PC-9 (cell line): ENCODE measurements at regions of chr15 and their contacts with region 1.

Region 1: DNA sequence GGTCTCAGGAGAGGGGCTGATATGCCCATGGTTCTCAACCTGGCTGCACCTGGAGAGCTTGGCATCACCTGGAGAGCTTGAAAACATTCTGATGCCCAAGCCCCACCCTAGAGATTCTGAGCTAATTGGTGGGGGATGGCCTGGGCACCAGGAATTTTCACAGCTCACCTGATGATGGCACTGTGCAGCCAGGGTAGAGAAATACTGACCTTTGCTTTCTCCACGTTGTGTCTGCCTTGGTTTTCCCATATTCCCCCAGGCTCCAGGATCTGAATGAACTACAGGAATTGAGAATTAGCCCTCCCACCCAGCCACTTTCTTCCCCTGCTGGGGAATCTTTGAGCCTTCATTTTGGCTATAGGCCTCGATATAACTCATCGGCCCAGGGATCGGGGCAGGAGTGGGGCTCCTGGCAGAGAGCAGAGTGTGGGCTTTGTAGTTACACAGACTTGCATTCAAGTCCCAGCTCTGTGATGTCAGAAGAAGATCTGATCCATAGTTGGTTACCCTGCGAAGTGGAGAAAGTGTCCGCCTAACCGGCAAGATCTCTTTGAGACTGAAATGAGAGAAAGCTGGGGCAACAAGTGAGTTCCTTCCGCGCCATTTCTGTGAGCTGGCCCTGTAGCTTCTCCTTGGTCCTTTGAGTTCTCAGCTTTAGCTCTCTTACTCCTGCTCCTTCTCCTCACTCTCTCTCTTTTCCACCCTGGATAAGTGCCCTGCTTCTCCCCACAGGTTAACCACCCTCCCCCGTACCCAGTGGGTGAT is 33.1 kb upstream of the UBE2Q2 start:
- DNase-seq: peak in 1 of 2 experiments; percentile 52
- H3K4me3 ChIP-seq: no peak overlapping the region
- H3K27ac ChIP-seq: no peak overlapping the region
- H3K4me1 ChIP-seq: no peaks in the 10 kb centered on the region
- H3K27me3 ChIP-seq: no peaks in the 10 kb centered on the region
- CTCF ChIP-seq: peak; percentile 57; the same call in 1 of the 2 replicates

Region 2: DNA sequence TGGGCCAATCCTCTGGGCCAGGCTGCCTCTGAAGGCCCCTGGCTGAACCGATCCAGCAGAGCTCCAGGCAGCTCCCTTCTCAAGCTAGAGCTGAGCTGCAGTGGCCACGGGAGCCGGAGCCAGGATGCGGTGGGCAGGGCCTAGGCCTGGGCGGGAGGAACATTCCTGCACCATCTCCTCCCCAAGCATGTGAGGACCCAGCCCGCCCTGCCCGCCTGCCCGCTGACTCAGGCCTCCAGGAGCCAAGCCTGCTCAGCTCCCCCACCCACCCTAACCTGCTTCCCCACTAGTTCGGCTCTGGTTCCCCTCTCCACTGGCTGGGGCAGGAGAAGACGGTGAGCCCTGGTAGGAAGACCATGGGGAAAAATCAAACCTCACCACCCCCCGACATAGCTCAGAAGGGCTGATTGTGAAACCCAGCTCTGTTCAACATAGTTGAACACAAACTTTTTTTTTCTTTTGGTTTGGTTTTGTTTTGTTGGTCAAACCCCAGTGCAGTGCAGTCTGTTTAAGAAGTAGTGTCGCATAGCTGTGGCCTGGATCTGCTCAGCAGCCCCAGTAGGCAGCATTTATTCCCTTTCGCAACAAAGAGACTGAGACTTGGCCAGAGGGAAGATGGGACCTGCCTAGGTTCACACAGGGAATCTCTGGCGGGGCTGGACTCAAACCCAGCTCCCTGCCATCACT is 148.9 kb before region 1 on chr15:
- CTCF ChIA-PET with region 1: no interaction called
- POLR2A ChIA-PET with region 1: interaction called, 14 read pairs
- intact Hi-C with region 1: no loop called
- DNase-seq: peak; percentile 82 to 91
- H3K4me3 ChIP-seq: peak overlapping the region; percentile 23; the same call in 1 of the 2 replicates
- H3K27ac ChIP-seq: peak overlapping the region; percentile 85
- H3K4me1 ChIP-seq: peaks cover 61% of the 10 kb centered on the region
- H3K27me3 ChIP-seq: no peaks in the 10 kb centered on the region
- CTCF ChIP-seq: no peak

Region 3: GRCh38 chr15:75903331-75904239 is 93.4 kb after region 1 on chr15 and contains the start of gene FBXO22:
- CTCF ChIA-PET with region 1: interaction called, 3 read pairs
- POLR2A ChIA-PET with region 1: no interaction called
- intact Hi-C with region 1: loop called (anchors 5 kb)
- DNase-seq: peak; percentile 78 to 92
- H3K4me3 ChIP-seq: peak within 1 kb of the TSS; percentile 99
- H3K27ac ChIP-seq: peak within 1 kb of the TSS; percentile 84
- H3K4me1 ChIP-seq: peaks cover 17% of the 10 kb centered on the region
- H3K27me3 ChIP-seq: no peaks in the 10 kb centered on the region
- CTCF ChIP-seq: no peak
- total RNA-seq, gene FBXO22: 37.5 and 47.9 TPM in 2 replicates

Region 4: GRCh38 chr15:75921729-75922703 is 111.8 kb after region 1 on chr15:
- CTCF ChIA-PET with region 1: interaction called, 6 read pairs
- POLR2A ChIA-PET with region 1: no interaction called
- intact Hi-C with region 1: loop called (anchors 1 kb)
- DNase-seq: peak in 1 of 2 experiments; percentile 15
- H3K4me3 ChIP-seq: no peak overlapping the region
- H3K27ac ChIP-seq: no peak overlapping the region
- H3K4me1 ChIP-seq: no peaks in the 10 kb centered on the region
- H3K27me3 ChIP-seq: no peaks in the 10 kb centered on the region
- CTCF ChIP-seq: peak; percentile 64

Region 5: DNA sequence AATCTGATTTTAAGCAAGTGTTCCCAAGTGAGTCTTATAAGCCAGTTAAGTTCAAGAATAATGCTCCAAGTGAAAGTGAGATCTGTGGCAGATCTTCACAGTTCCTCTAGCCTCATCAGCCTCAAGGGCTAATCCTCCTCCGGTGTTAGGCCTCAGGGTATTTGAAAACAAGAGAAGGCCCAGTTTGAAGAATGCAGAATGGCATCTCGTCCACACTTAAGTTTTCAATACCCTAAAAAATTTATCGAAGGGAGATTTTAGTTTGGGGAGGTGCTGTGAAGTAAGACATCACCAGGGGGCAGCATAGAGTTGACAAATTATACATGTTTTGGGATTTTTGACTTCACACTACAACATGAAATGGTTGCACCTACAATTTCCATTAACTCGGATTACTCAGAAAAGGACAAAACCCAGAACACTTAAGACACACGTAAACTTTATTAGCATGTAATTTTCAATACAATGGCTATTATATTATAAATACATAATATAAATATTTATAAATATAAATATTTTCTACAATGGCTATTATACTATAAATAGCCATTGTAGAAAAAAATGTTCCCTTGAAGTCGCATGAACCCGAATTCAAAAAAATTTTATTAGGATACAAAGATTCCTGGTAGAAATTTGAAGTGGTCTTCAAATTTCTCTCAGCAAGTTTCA is 247.3 kb after region 1 on chr15:
- CTCF ChIA-PET with region 1: interaction called, 7 read pairs
- POLR2A ChIA-PET with region 1: interaction called, 6 read pairs
- intact Hi-C with region 1: loop called (anchors 5 kb)
- DNase-seq: peak; percentile 15 to 43
- H3K4me3 ChIP-seq: peak overlapping the region; percentile 27; the same call in 1 of the 2 replicates
- H3K27ac ChIP-seq: no peak overlapping the region
- H3K4me1 ChIP-seq: peaks cover 16% of the 10 kb centered on the region
- H3K27me3 ChIP-seq: peaks cover 21% of the 10 kb centered on the region; the same call in 1 of the 2 replicates
- CTCF ChIP-seq: peak; percentile 89

Region 6: GRCh38 chr15:76139368-76140073 is 329.4 kb after region 1 on chr15:
- CTCF ChIA-PET with region 1: interaction called, 19 read pairs
- POLR2A ChIA-PET with region 1: no interaction called
- intact Hi-C with region 1: loop called (anchors 1 kb)
- DNase-seq: peak; percentile 47 to 69
- H3K4me3 ChIP-seq: no peak overlapping the region
- H3K27ac ChIP-seq: no peak overlapping the region
- H3K4me1 ChIP-seq: no peaks in the 10 kb centered on the region
- H3K27me3 ChIP-seq: peaks cover 13% of the 10 kb centered on the region; the same call in 1 of the 2 replicates
- CTCF ChIP-seq: peak; percentile 95